Breast epithelium (tissue), 4 donors: ENCODE measurements at regions of chr3 and their contacts with region 1.

Region 1: DNA sequence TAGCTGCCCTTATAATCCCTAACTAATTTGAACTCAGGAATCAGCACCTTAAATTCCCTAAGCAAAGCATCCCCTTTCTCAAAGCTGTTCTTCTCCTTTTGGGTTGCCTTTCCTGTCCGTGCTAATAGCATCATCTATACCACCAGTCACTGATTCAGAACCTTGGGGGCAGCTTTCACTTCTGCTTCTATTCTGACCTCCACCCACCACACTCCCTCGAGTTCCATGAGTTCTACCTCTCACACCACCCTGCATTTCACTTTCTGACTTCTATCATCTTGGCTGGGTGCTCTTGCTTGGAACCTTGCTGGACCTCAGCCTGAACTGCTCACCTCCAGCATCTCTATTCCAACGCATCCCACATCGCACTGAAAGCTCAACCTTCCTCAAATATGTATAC is 55.4 kb upstream of the KCNMB2 start:
- DNase-seq: no peak
- H3K4me3 ChIP-seq: no peak overlapping the region
- H3K27ac ChIP-seq: no peak overlapping the region
- H3K4me1 ChIP-seq: no peaks in the 10 kb centered on the region
- H3K27me3 ChIP-seq: no peaks in the 10 kb centered on the region
- CTCF ChIP-seq: no peak
- POLR2A ChIP-seq: no peak

Region 2: DNA sequence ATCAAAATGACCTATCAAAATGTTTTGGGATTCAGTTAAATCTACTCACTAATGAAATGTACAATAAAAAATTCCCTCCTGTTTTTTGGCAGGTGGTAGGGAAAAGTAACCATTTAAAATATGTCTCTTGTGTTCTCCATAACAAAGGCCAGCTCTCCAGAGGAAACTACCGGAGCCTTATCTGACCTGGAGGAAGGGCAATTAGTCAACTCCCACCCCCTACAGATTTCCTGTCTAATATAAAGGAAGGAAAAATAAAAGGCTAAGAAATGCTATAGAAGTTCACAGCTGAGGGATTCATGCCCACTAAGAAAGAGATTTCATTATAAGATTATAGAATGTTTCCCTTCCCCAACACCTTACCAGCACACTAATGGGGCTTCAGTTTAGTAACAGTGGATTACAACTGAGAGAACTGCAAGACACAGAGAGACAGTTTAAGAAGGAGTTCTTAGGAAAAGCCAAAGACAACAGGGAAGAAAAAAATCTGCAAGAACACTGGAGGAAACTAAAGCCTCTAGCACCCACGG is 321.0 kb before region 1 on chr3:
- intact Hi-C with region 1: loop called (anchors 10 kb)
- DNase-seq: no peak
- H3K4me3 ChIP-seq: no peak overlapping the region
- H3K27ac ChIP-seq: no peak overlapping the region
- H3K4me1 ChIP-seq: no peaks in the 10 kb centered on the region
- H3K27me3 ChIP-seq: no peaks in the 10 kb centered on the region
- CTCF ChIP-seq: no peak
- POLR2A ChIP-seq: no peak

Region 3: GRCh38 chr3:178646186-178646862 is 165.5 kb after region 1 on chr3:
- intact Hi-C with region 1: no loop called
- DNase-seq: no peak
- H3K4me3 ChIP-seq: no peak overlapping the region
- H3K27ac ChIP-seq: no peak overlapping the region
- H3K4me1 ChIP-seq: no peaks in the 10 kb centered on the region
- H3K27me3 ChIP-seq: no peaks in the 10 kb centered on the region
- CTCF ChIP-seq: no peak
- POLR2A ChIP-seq: no peak